Adrenal gland (tissue), 19 donors: ENCODE measurements at regions of chr7 and their contacts with region 1.

Region 1: GRCh38 chr7:73342645-73343044 is 14.7 kb downstream of the FKBP6 start:
- DNase-seq: peak in 2 of 7 donors; percentile 42
- H3K4me3 ChIP-seq: no peak overlapping the region
- H3K27ac ChIP-seq: no peak overlapping the region
- H3K4me1 ChIP-seq: no peaks in the 10 kb centered on the region
- H3K27me3 ChIP-seq: no peaks in the 10 kb centered on the region
- CTCF ChIP-seq: peak in 5 of 6 experiments; percentile 34 to 53 (median 40)
- POLR2A ChIP-seq: no peak

Region 2: DNA sequence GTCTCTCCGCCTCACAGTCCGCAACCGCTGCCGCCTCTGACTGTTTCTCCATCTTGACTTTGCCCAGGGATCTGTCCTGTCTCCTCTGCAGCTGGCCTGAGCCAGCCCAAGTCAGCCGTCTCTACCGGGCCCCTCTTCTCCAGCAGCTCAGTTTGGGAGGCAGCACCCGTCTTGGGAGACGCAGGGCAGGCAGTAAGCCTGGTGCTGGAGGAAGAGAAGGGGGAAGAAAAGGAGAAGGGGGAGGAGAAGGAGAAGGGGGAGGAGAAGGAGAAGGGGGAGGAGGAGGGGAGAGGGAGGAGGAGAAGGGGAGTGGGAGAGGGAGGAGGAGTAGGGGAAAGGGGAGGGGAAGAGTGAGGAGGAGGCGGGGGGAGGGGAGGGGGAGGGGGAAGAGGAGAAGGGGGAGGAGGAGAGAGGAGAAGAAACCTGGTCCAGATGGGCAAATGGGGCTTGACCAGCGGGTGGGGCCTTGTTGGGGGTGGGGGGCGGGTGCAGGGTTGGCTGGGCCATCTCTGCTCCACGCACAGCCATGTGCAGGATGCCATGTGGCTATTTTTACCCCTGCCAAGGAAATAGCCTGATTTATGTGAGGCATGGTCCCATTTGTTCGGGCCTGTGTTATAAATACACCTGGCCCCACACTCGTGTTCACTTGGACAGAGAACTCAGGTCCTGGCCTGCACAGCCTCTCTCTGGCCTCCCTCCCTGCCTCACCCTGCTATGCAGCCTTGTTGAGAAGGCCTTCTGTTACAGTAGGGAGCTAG is 55.1 kb after region 1 on chr7:
- intact Hi-C with region 1: loop called in 1 of 2 experiments (anchors 10 kb)
- DNase-seq: no peak
- H3K4me3 ChIP-seq: no peak overlapping the region
- H3K27ac ChIP-seq: no peak overlapping the region
- H3K4me1 ChIP-seq: no peaks in the 10 kb centered on the region
- H3K27me3 ChIP-seq: no peaks in the 10 kb centered on the region
- CTCF ChIP-seq: no peak
- POLR2A ChIP-seq: no peak

Region 3: GRCh38 chr7:73433924-73434700 is 91.5 kb after region 1 on chr7:
- intact Hi-C with region 1: loop called in 1 of 2 experiments (anchors 5 kb)
- DNase-seq: no peak
- H3K4me3 ChIP-seq: peak overlapping the region in 1 of 4 donors; percentile 61
- H3K27ac ChIP-seq: no peak overlapping the region
- H3K4me1 ChIP-seq: peaks cover 0 to 4% of the 10 kb centered on the region in 2 donors
- H3K27me3 ChIP-seq: no peaks in the 10 kb centered on the region
- CTCF ChIP-seq: no peak
- POLR2A ChIP-seq: no peak

Region 4: GRCh38 chr7:73451780-73452398 is 109.2 kb after region 1 on chr7:
- intact Hi-C with region 1: loop called in 1 of 2 experiments (anchors 5 kb)
- DNase-seq: peak in 1 of 7 donors; percentile 51
- H3K4me3 ChIP-seq: no peak overlapping the region
- H3K27ac ChIP-seq: peak overlapping the region in 3 of 5 donors; percentile 46 to 69 (median 66)
- H3K4me1 ChIP-seq: peaks cover 16 to 18% of the 10 kb centered on the region in 2 donors
- H3K27me3 ChIP-seq: no peaks in the 10 kb centered on the region
- CTCF ChIP-seq: peak; percentile 98 to 100 (median 98)
- POLR2A ChIP-seq: no peak